IMR-90 (cell line): ENCODE measurements at regions of chr6 and their contacts with region 1.

Region 1: DNA sequence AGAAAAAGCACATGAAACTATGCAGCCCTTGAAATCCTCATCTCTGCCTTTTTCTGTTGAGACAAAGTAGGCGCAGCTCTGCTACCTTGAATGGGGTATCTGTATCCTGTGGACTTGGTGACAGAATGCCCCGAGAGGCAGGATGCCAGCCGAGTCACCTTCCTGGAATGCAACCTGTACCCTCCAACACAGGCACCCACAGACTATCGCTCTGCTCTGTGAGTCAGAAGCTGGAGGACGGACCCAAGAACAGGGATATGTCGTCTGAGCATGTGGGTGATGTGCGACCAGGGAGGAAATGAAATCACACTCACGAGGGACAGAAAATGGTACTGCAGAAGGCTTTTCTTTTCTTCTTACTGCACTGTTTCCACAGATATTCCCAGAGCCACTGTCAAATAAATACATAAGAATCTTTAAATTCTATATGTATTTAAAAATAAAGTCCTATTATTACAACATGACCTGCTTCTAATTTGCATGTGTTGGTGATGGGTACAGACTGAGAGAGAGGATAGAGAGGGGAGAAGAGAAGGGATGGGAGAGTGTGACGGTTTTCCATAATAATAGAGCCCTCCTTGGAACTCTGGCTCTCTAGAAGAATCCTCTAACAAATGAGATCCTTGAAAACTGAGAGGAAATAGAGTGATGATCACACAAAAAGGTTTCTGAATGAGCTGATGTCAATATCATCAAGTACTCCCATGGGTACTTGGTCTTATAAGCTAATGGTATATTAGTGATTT is 308.1 kb downstream of the FOXC1 start:
- DNase-seq: peak; percentile 91
- ATAC-seq: peak; percentile 89
- H3K4me3 ChIP-seq: no peak overlapping the region
- H3K27ac ChIP-seq: peak overlapping the region; percentile 0; the same call in 1 of the 2 replicates
- H3K4me1 ChIP-seq: peaks cover 11% of the 10 kb centered on the region
- H3K27me3 ChIP-seq: no peaks in the 10 kb centered on the region
- CTCF ChIP-seq: no peak
- POLR2A ChIP-seq: no peak
- RAD21 ChIP-seq: no peak; the same call in 1 of the 2 replicates

Region 2: DNA sequence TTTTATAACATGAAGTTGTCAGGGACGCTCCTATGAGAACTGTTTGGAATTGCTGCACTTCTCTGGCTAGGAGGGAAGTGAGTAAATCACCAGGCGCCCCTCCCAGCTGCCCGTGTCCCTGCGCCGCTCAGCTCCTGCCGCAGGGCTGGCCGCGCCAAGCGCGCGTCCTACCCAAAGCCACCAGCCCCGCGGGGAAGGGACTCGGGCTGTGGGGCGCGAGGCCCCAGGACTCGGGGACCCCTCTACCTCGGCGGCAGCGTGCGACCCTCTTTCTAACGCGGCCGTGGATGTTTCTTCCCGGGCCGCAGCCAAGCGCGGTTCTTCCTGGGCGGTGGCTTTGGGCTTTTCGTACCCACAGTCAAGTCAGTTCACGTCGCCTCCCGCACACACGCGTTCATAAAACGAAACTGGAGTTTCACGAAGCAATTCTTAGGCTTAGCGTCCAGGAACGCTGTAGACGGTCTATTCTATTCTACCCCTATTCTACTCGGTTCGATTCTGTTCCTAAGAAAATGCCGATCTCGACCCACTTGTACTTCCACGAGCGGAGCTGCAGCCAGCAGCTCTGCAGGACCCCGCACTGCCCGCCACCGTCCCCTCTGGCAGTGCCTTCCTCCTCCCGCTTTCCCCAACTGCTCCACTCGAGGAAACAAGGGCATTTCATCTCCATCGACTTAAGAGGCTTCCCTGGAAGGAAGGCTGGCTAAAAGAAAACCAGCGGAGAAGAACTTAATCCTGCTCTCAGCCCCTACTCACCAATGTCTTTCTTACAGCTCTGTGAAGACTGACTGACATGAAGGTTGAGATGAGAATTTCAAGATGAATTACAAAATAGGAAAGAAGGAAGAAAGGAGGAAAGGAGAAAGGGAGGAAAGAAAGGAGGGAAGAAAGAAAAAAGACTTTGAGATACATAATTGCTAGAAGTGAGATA is 292.7 kb before region 1 on chr6:
- CTCF ChIA-PET with region 1: no interaction called
- POLR2A ChIA-PET with region 1: interaction called, 28 read pairs
- dilution Hi-C with region 1: no loop called
- in situ Hi-C with region 1: no loop called
- intact Hi-C with region 1: no loop called
- DNase-seq: peak; percentile 62
- ATAC-seq: peak; percentile 85
- H3K4me3 ChIP-seq: peak overlapping the region; percentile 67
- H3K27ac ChIP-seq: peak overlapping the region; percentile 56
- H3K4me1 ChIP-seq: peaks cover 9% of the 10 kb centered on the region
- H3K27me3 ChIP-seq: peaks cover 2% of the 10 kb centered on the region
- CTCF ChIP-seq: no peak
- POLR2A ChIP-seq: no peak
- RAD21 ChIP-seq: no peak

Region 3: DNA sequence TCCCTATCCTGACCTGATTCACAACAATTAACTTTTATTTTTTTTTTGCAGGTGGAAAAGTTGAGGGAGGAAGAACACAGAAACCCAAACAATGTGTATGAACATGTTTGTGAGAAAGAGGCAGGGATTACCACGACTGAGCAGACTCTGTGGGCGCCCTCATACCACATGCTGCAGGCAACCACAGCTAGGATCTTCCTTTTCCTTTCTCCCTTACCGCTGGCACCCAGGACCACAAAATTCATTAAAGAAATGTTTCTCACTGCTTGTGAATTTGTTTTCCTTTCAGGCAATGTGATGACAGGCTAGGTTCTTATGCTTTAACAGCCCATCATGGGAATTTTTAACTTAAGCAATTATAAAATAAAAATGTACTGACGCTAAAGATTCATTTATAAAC is 40.5 kb after region 1 on chr6:
- CTCF ChIA-PET with region 1: no interaction called
- POLR2A ChIA-PET with region 1: no interaction called
- dilution Hi-C with region 1: no loop called
- in situ Hi-C with region 1: no loop called
- intact Hi-C with region 1: no loop called
- DNase-seq: no peak
- ATAC-seq: no peak
- H3K4me3 ChIP-seq: no peak overlapping the region
- H3K27ac ChIP-seq: no peak overlapping the region
- H3K4me1 ChIP-seq: no peaks in the 10 kb centered on the region; the same call in 1 of the 2 replicates
- H3K27me3 ChIP-seq: no peaks in the 10 kb centered on the region
- CTCF ChIP-seq: no peak
- POLR2A ChIP-seq: no peak
- RAD21 ChIP-seq: no peak